Mammary epithelial cell (primary cell): ENCODE measurements at regions of chr18 and their contacts with region 1.

Region 1: DNA sequence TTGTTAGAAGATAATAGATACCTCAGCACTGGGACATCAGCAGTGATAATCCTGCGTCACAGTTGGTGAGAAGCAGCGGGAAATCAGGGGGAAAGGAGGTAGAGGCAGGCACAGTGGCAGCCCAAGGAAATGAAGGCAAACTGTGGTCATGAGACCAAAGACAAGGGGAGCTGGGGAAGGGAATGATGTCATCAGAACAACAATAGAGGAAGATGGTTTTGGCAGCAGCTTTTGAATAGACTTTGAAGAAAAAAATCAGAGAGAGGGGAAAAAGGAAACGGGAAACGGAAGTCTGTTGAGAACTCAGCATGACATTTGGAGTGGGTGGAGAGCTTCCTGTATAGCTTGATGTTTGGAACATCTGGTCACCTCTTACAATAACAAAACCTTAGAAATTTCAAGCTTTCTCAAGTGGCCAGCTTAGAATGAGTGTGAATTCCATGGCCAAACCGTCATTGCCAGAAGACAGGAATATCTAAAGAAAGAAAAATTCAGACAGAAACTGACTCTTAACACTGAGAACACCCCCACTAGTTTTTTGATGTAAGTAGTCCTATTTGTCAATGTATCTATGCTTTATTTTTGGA is 18.4 kb upstream of the YES1 start:
- DNase-seq: peak; percentile 11
- H3K4me3 ChIP-seq: no peak overlapping the region
- H3K27ac ChIP-seq: no peak overlapping the region
- H3K4me1 ChIP-seq: peaks cover 9% of the 10 kb centered on the region
- H3K27me3 ChIP-seq: no peaks in the 10 kb centered on the region
- CTCF ChIP-seq: no peak

Region 2: DNA sequence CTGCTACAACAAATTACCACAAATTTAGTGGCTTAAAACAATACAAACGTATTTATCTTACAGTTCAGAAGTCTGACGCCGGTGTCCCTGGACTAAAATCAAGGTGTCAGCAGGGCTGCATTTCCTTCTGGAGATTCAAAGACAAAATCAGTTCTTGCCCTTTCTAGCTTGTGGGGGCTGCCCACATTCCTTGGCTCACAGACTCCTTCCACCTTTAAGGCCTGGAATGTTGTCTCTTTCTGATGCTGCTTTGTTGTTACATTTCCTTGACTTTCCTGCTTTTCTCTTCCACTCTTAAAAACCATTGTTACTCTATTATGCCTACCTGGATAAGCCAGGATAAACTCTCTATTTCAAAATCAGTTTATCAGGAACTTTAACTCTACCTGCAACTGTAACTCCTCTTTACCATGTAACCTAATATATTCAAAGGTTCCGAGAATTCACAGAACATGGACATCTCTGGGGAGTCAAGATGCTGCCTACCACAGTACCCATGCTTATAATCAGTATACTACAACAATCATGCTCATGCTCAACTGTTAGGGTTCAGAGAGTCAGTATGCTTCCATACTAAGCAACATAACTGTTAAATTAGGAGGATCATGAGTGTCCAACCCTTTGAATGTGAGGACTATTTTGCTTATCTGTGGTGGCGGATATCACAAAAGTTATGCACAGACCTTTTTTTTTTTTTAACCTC is 45.8 kb before region 1 on chr18:
- CTCF ChIA-PET with region 1: no interaction called
- dilution Hi-C with region 1: loop called (anchors 5 kb)
- in situ Hi-C with region 1: no loop called
- intact Hi-C with region 1: no loop called
- DNase-seq: no peak
- H3K4me3 ChIP-seq: no peak overlapping the region
- H3K27ac ChIP-seq: no peak overlapping the region
- H3K4me1 ChIP-seq: no peaks in the 10 kb centered on the region
- H3K27me3 ChIP-seq: no peaks in the 10 kb centered on the region
- CTCF ChIP-seq: no peak

Region 3: GRCh38 chr18:812376-813171 is 17.8 kb before region 1 on chr18:
- CTCF ChIA-PET with region 1: no interaction called
- dilution Hi-C with region 1: no loop called
- in situ Hi-C with region 1: no loop called
- intact Hi-C with region 1: loop called (anchors 2 kb)
- DNase-seq: peak; percentile 75
- H3K4me3 ChIP-seq: peak overlapping the region; percentile 75 to 100 (median 95)
- H3K27ac ChIP-seq: peak overlapping the region; percentile 92
- H3K4me1 ChIP-seq: peaks cover 6% of the 10 kb centered on the region
- H3K27me3 ChIP-seq: no peaks in the 10 kb centered on the region
- CTCF ChIP-seq: no peak

Region 4: DNA sequence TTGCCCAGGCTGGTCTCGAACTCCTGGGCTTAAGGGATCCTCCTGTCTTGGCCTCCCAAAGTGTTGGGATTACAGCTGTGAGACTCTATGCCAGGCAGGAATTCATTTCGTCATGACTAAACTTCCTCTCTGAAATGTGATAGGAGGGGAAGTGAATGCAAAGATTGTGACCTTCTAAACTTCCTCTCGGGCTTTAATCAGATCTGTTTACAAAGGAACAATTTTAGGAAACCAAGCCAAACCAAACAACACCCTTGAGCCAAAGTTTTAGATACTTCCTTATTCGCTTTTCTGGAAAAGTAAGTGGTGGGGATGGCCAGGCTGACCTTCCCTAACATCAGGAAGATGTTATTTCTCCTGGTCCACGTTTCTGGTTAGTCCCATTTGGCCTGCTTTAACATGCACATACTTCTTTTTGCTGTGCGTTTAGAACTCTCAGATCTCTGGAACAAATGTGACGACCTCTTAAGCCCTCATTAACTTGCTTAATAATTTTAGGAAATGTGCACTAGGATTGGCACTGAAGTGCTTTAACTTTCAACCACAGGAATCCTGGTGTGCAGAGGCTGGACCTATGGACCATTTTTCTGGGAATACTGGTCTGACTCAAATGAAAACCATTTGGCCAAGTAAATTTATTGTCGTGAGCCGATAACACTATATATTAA is 14.9 kb after region 1 on chr18:
- CTCF ChIA-PET with region 1: no interaction called
- dilution Hi-C with region 1: no loop called
- in situ Hi-C with region 1: no loop called
- intact Hi-C with region 1: no loop called
- DNase-seq: no peak
- H3K4me3 ChIP-seq: no peak overlapping the region
- H3K27ac ChIP-seq: no peak overlapping the region
- H3K4me1 ChIP-seq: no peaks in the 10 kb centered on the region
- H3K27me3 ChIP-seq: no peaks in the 10 kb centered on the region
- CTCF ChIP-seq: no peak

Region 5: DNA sequence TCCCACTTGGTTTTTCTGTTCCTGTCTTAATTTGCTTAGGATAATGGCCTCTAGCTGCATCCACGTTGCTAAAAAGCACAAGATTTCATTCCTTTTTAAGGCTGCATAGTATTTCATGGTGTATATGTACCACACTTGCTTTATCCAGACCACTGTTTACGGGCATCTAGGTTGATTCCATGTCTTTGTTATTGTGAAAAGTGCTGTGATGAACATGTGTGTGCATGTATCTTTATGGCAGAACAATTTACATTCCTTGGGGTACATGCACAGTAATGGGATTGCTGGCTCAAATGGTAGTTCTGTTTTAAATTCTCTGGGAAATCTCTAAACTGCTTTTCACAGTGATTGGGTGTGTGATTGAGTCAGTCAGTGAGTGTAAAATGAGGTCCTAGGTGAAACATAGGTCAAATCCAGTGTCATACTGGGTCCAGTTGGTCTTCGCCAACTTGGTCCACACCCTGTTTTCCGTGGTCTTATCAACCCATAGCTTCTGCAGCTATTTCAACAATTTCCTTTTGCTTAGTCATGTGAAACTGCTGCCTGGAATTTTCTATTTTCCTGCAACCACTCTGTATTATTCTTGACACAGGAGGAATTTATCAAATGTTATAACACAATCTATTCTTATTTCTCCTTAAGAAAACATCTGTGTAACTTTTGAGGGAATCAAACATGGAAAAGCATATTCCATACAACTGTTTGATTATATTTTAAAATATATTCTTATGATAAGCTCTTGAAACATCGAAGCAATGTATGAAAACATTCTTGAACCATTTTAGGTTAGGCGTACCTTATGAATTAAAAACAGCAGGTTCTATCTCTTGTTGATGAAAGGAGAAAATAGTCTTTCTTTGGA is 157.1 kb after region 1 on chr18:
- CTCF ChIA-PET with region 1: no interaction called
- dilution Hi-C with region 1: no loop called
- in situ Hi-C with region 1: no loop called
- intact Hi-C with region 1: no loop called
- DNase-seq: no peak
- H3K4me3 ChIP-seq: no peak overlapping the region
- H3K27ac ChIP-seq: no peak overlapping the region
- H3K4me1 ChIP-seq: no peaks in the 10 kb centered on the region
- H3K27me3 ChIP-seq: no peaks in the 10 kb centered on the region
- CTCF ChIP-seq: no peak